ENCODE measurements at regions of chr2 and their contacts with region 1.

Region 1: GRCh38 chr2:30208452-30208851 is 22.9 kb upstream of the LBH start:
- DNase-seq: peak; percentile 73
- H3K4me3 ChIP-seq: no peak overlapping the region
- H3K27ac ChIP-seq: no peak overlapping the region
- H3K27me3 ChIP-seq: peaks cover 13% of the 10 kb centered on the region
- CTCF ChIP-seq: peak; percentile 96

Region 2: DNA sequence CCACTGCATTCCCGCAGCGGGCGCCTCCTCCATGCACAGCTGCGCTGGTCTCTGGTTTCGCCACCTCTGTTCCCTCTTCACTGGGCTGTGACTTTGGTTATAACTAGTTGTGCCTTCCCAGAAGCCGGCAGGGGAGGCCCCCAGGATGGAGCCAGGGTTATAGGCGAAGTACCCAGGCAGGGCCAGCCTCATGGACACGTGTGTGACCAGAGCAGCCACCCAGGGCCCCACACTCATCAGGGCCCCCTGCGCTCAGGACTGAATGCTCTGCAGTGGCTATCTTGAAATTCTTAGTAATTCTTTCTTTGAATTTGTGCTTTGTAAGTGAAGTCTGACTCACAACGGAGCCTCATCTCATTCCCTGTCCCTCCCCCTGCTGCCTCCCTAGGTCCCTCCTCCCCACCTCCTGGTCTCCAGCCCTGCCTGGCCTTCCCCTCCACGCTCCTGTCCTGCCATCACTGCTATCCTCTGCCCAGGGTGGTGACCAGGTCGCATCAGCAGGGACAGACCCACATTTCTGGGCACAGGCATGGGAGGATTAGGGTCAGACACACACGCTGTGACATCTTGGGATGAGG is 15.3 kb before region 1 on chr2:
- CTCF ChIA-PET with region 1: interaction called, 11 read pairs
- POLR2A ChIA-PET with region 1: no interaction called
- DNase-seq: no peak
- H3K4me3 ChIP-seq: no peak overlapping the region
- H3K27ac ChIP-seq: no peak overlapping the region
- H3K27me3 ChIP-seq: peaks cover 8% of the 10 kb centered on the region
- CTCF ChIP-seq: no peak

Region 3: GRCh38 chr2:30225131-30225762 is 16.8 kb after region 1 on chr2:
- CTCF ChIA-PET with region 1: interaction called, 33 read pairs
- POLR2A ChIA-PET with region 1: interaction called, 25 read pairs
- DNase-seq: peak; percentile 56
- H3K4me3 ChIP-seq: peak overlapping the region; percentile 60
- H3K27ac ChIP-seq: peak overlapping the region; percentile 94
- H3K27me3 ChIP-seq: peaks cover 2% of the 10 kb centered on the region
- CTCF ChIP-seq: peak; percentile 24

Region 4: DNA sequence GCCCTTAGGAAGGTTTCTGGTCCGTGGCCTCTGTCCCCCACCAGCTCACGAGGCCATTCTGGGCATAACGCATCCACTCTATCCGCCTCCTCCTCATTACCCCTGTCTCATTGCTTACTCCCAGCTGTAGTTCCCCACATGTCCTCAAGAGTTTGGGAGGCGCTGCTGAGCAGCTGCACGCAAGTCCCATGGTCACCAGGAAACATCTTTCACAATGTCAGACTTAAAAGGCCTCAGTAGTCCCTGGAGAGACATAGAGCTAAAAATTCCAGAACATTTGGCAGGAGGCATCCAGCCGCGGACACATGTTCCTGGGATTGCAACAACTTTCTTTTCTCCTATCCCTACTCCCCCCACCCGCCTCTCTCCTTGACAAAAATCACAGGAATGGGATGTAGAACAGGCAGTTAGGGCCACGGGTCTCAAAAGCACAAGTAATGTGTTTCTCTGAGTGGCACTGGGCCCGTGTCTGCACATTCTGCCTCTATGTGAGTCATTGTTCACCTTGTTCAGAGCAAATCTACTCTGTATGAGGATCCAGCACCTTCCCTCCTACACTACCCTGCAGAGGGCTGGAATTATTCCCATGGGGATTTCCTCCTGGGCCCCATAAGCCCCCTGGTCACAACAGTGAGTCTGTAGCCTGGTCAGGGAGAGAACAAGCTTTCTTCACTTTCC is 31.0 kb after region 1 on chr2:
- CTCF ChIA-PET with region 1: interaction called, 23 read pairs
- POLR2A ChIA-PET with region 1: no interaction called
- DNase-seq: no peak
- H3K4me3 ChIP-seq: no peak overlapping the region
- H3K27ac ChIP-seq: peak overlapping the region; percentile 63
- H3K27me3 ChIP-seq: no peaks in the 10 kb centered on the region
- CTCF ChIP-seq: peak; percentile 93

Region 5: DNA sequence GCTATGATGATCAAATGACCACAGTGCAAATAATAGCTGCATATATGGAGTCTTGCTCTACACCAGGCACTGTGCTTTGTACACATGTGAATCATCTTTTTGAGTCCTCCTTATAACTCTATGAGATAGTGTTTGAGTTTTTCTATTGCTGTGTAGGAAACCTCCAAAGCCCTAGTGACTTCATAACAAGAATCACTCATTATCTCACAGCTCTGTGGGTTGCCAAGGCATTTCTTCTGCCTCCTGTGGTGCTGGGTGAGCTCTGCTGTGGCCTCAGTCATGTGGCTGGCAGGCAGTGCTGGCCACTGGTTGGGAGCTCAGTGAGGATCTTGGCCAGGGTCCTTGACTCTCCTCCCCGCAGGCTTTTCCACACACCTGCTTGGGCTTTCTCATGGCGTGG is 445.4 kb after region 1 on chr2:
- CTCF ChIA-PET with region 1: interaction called, 10 read pairs
- POLR2A ChIA-PET with region 1: no interaction called
- DNase-seq: no peak
- H3K4me3 ChIP-seq: no peak overlapping the region
- H3K27ac ChIP-seq: peak overlapping the region; percentile 11
- H3K27me3 ChIP-seq: no peaks in the 10 kb centered on the region
- CTCF ChIP-seq: no peak

Region 6: GRCh38 chr2:30807249-30807648 is 598.8 kb after region 1 on chr2 and contains the start of gene CAPN13:
- CTCF ChIA-PET with region 1: interaction called, 12 read pairs
- POLR2A ChIA-PET with region 1: no interaction called
- DNase-seq: no peak
- H3K4me3 ChIP-seq: no peak within 1 kb of the TSS
- H3K27ac ChIP-seq: no peak within 1 kb of the TSS
- H3K27me3 ChIP-seq: peaks cover 3% of the 10 kb centered on the region
- CTCF ChIP-seq: no peak
- polyA plus RNA-seq, gene CAPN13: not detected in 2 replicates

Region 7: GRCh38 chr2:31122133-31122532 is 913.7 kb after region 1 on chr2:
- CTCF ChIA-PET with region 1: no interaction called
- POLR2A ChIA-PET with region 1: no interaction called
- DNase-seq: no peak
- H3K4me3 ChIP-seq: no peak overlapping the region
- H3K27ac ChIP-seq: no peak overlapping the region
- H3K27me3 ChIP-seq: peaks cover 2% of the 10 kb centered on the region
- CTCF ChIP-seq: no peak